ENCODE measurements at regions of chr12 and their contacts with region 1.

Region 1: DNA sequence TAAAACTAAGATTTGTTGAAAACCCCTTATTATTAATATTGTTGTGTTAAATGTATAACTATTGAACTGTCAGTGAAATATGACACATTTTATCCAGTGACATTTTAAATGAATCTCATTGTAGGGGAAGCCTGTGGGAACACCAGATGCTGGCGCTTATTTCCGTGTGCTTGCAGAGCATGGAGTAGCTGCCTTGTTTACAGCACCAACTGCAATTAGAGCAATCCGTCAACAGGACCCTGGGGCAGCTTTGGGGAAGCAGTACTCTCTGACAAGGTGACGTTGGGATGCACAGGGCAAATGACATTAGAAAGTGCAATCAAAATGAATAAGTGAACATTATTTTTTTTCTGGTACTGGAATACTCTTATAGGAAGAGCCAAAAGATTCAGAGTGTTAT is 96.8 kb downstream of the ACSS3 start:
- DNase-seq: no peak
- ATAC-seq: no peak
- H3K4me3 ChIP-seq: no peak overlapping the region
- H3K4me3 Mint-ChIP-seq: no peak overlapping the region
- H3K27ac ChIP-seq: no peak overlapping the region
- H3K27ac Mint-ChIP-seq: no peak overlapping the region
- H3K4me1 ChIP-seq: no peaks in the 10 kb centered on the region
- H3K4me1 Mint-ChIP-seq: no peaks in the 10 kb centered on the region
- H3K27me3 ChIP-seq: no peaks in the 10 kb centered on the region
- H3K27me3 Mint-ChIP-seq: no peaks in the 10 kb centered on the region
- CTCF ChIP-seq: no peak

Region 2: DNA sequence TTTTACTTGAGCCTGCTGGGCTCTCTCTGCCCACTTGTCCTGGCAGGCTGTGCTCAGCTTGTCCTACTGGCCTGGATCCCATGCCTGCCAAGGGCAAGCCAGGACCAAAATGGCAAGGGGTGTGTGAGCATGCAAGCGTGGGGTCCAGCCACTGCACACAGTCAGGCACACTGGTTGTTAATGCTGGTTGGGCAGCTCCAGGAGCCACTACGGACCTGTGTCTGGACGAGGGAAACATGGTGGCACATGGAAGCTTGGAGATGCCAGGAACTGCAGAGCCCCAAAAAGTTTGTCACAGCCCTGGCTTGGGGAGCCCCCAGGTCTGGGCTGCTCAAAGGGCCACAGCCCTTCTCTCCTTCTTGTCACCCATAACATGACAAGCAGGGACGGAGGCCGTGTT is 13.0 kb before region 1 on chr12:
- CTCF ChIA-PET with region 1: no interaction called
- POLR2A ChIA-PET with region 1: no interaction called
- intact Hi-C with region 1: no loop called
- DNase-seq: no peak
- ATAC-seq: no peak
- H3K4me3 ChIP-seq: no peak overlapping the region
- H3K4me3 Mint-ChIP-seq: no peak overlapping the region
- H3K27ac ChIP-seq: no peak overlapping the region
- H3K27ac Mint-ChIP-seq: no peak overlapping the region
- H3K4me1 ChIP-seq: no peaks in the 10 kb centered on the region
- H3K4me1 Mint-ChIP-seq: no peaks in the 10 kb centered on the region
- H3K27me3 ChIP-seq: no peaks in the 10 kb centered on the region
- H3K27me3 Mint-ChIP-seq: no peaks in the 10 kb centered on the region
- CTCF ChIP-seq: no peak

Region 3: GRCh38 chr12:81187686-81188085 is 13.0 kb after region 1 on chr12:
- CTCF ChIA-PET with region 1: no interaction called
- POLR2A ChIA-PET with region 1: no interaction called
- intact Hi-C with region 1: loop called in 1 of 2 experiments (anchors 1 kb)
- DNase-seq: no peak
- ATAC-seq: no peak
- H3K4me3 ChIP-seq: no peak overlapping the region
- H3K4me3 Mint-ChIP-seq: no peak overlapping the region
- H3K27ac ChIP-seq: no peak overlapping the region
- H3K27ac Mint-ChIP-seq: no peak overlapping the region
- H3K4me1 ChIP-seq: no peaks in the 10 kb centered on the region
- H3K4me1 Mint-ChIP-seq: no peaks in the 10 kb centered on the region
- H3K27me3 ChIP-seq: no peaks in the 10 kb centered on the region
- H3K27me3 Mint-ChIP-seq: no peaks in the 10 kb centered on the region
- CTCF ChIP-seq: no peak

Region 4: GRCh38 chr12:81229758-81230157 is 55.1 kb after region 1 on chr12:
- CTCF ChIA-PET with region 1: no interaction called
- POLR2A ChIA-PET with region 1: no interaction called
- intact Hi-C with region 1: no loop called
- DNase-seq: no peak
- ATAC-seq: no peak
- H3K4me3 ChIP-seq: no peak overlapping the region
- H3K4me3 Mint-ChIP-seq: no peak overlapping the region
- H3K27ac ChIP-seq: no peak overlapping the region
- H3K27ac Mint-ChIP-seq: no peak overlapping the region
- H3K4me1 ChIP-seq: no peaks in the 10 kb centered on the region
- H3K4me1 Mint-ChIP-seq: no peaks in the 10 kb centered on the region
- H3K27me3 ChIP-seq: no peaks in the 10 kb centered on the region
- H3K27me3 Mint-ChIP-seq: no peaks in the 10 kb centered on the region
- CTCF ChIP-seq: no peak